OCI-LY7 (cell line): ENCODE measurements at regions of chr1 and their contacts with region 1.

Region 1: GRCh38 chr1:54488779-54489626 is 59.0 kb upstream of the ACOT11 start:
- DNase-seq: peak; percentile 71
- H3K4me3 ChIP-seq: peak overlapping the region; percentile 71
- H3K27ac ChIP-seq: peak overlapping the region; percentile 59
- H3K4me1 ChIP-seq: peaks cover 31% of the 10 kb centered on the region
- CTCF ChIP-seq: peak; percentile 96

Region 2: DNA sequence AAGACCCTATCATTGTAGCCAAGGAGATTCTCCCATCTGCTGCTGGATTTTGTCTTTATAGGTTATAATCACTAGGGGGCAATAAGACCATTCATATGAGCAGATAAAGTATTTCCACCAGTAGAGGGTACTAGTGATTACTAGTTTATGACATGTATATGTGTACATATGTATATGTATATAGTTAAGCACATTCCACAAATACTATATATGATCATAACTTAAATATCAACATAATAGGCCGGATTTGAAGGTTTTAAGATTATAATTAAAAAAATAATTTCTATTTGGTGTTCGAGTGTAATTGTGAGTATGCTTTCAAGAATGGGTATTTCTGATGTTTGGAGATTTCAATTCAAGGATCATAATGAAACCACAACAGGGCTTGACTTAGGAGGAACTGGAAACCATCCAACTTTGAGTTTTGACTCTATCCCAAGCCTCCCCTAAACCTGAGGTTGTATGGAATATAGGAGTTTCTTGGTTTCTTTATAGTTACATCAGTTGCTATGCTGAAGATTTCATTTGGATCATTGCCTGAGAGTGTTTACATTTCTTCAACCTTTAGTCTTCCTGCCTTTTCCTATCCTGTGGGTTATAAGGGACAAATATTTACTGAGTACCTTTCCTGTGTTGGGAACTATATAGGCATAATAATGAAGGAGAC is 418.7 kb before region 1 on chr1:
- CTCF ChIA-PET with region 1: no interaction called
- POLR2A ChIA-PET with region 1: no interaction called
- intact Hi-C with region 1: loop called (anchors 2 kb)
- DNase-seq: peak; percentile 69
- H3K4me3 ChIP-seq: no peak overlapping the region
- H3K27ac ChIP-seq: no peak overlapping the region
- H3K4me1 ChIP-seq: no peaks in the 10 kb centered on the region
- CTCF ChIP-seq: peak; percentile 100

Region 3: DNA sequence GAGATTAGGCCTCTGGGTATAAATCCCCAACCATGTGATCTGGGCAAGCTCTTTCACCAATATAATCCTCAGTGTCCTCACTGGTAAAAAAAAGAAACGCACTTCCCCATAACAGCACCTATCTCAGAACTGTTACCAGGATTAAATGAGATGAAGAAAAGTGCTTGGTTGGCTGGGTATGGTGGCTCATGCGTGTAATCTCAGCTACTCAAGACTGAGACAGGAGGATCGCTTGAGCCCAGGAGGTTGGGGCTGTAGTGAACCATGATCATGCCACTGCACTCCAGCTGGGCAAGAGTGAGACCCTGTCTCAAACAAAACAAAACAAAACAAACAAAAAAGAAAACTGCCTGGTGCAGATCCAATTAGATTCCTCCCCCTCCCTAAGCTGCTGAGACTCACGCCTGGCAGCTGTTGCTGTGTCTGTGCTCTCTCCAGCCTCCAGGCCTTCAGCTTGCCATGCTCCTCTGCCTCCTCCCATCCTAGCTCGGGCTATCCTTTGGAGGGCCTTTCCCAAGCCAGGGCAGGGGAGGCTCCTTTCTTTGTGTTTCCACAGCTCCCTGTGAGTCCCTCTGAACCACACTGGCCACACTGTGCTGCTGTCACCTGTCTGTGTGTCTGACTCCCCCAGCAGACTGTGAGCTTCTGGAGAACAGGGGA is 308.2 kb before region 1 on chr1:
- CTCF ChIA-PET with region 1: no interaction called
- POLR2A ChIA-PET with region 1: no interaction called
- intact Hi-C with region 1: loop called (anchors 1 kb)
- DNase-seq: no peak
- H3K4me3 ChIP-seq: no peak overlapping the region
- H3K27ac ChIP-seq: no peak overlapping the region
- H3K4me1 ChIP-seq: no peaks in the 10 kb centered on the region
- CTCF ChIP-seq: no peak

Region 4: DNA sequence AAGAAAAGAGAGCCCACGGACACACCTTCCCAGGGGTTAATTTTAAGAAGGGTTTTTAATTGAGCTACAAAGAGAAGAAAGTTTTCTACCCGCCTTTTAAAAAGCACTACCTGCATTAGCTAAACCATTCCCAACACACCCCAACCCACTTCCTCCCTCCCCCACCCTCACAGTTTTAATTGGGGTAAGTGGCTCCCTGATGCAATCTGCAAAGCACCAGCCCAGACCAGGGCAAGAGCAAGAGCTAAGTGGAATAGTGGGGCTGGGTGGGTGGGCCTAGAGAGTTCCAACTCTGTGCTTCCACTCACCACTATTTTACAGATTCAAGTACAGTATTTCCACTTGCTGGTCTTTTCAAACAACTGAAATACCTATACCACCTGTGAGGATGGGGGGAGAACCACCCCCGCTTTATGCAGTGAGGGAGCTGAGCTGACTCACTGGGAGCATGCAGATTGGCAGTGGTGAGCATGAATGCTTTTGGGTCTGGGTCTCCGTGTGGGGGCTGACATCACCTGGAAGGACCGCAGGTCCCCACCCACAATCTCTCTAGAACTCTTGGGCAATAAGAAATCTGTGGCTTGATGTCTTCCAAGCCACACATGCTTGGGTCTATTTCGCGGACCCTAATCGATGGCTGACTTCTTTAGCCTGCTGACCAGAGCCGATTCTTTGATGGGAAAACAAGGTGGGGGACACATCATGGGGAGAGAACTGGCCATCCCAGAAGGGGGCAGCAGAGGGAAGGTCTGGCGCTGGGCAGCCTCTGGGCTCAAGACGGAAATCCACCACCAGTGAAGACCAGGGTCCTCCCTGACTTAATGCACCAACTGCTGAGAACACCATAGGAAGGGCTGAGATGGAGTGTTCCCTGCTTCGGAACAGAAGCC is 178.3 kb before region 1 on chr1:
- CTCF ChIA-PET with region 1: interaction called, 4 read pairs
- POLR2A ChIA-PET with region 1: no interaction called
- intact Hi-C with region 1: loop called (anchors 1 kb)
- DNase-seq: peak; percentile 41
- H3K4me3 ChIP-seq: no peak overlapping the region
- H3K27ac ChIP-seq: no peak overlapping the region
- H3K4me1 ChIP-seq: peaks cover 7% of the 10 kb centered on the region
- CTCF ChIP-seq: peak; percentile 75

Region 5: DNA sequence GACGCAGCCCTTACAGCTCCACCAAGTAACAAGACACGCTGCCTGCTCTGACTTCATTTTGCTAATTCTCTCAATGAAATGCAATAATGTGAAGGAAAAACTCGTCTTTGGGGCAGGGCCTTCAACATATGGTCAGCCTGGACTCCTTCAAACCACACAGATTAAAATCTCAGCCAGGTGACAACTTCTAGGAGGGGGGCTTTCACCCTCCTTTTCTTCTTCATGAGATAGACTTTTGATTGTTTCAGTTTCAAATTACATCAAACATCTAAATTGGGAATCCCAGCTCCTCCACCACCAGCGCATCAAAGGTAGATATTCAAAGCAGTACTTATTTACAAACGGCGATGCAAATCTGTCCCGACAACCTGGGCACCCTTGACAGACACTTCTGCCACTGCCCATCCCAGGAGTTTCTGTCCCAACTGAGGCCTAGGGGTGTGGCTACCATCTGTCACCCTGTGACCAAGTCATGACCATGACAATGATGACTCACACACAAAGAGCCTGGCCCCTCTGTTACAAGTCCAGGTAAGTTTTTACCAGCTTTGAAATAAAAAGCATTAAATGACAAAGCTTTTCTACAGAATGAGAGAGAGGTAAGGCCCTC is 112.5 kb before region 1 on chr1:
- CTCF ChIA-PET with region 1: no interaction called
- POLR2A ChIA-PET with region 1: no interaction called
- intact Hi-C with region 1: loop called (anchors 1 kb)
- DNase-seq: peak; percentile 72
- H3K4me3 ChIP-seq: peak overlapping the region; percentile 57
- H3K27ac ChIP-seq: peak overlapping the region; percentile 95
- H3K4me1 ChIP-seq: peaks cover 83% of the 10 kb centered on the region
- CTCF ChIP-seq: no peak

Region 6: GRCh38 chr1:54425152-54425584 is 63.8 kb before region 1 on chr1:
- CTCF ChIA-PET with region 1: no interaction called
- POLR2A ChIA-PET with region 1: interaction called, 10 read pairs
- intact Hi-C with region 1: no loop called
- DNase-seq: no peak
- H3K4me3 ChIP-seq: no peak overlapping the region
- H3K27ac ChIP-seq: no peak overlapping the region
- H3K4me1 ChIP-seq: no peaks in the 10 kb centered on the region
- CTCF ChIP-seq: no peak